PC-9 (cell line): ENCODE measurements at regions of chr3 and their contacts with region 1.

Region 1: DNA sequence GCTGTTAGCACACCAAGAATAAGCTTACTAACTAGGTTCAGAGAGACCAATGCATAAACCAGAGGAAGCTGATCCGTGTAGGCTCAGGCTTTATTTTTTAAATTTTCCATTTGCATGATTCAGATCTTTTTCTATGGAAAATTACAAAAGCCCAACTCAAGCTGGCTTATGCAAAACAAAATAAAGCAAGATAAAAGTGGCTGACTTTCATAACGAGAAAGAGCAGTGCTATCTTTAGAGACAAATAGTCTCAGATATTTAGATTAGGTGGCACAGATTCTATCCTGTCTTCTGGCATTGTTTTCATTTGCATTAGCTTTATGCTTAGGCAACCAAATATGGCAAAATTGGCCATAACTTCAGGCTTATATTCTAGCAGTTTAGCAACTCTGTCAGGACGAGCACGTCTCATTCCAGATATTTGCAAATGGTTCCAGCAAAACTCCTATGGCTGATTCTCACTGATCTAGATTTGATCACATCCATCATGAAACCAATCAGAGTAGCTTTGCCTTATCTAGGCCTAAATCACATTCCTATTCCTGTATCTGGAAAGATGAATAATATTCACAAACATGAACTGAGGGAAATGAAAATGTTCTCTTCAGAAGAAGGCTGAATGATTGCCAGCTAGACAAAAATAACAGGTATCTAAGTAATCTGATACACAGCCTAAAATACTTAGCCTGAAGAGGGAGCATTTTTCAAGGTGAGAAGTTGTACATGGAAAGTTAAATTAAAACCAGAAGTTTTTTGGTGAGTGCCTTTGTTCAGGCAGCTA is 216.4 kb upstream of the DPPA4 start:
- DNase-seq: peak; percentile 27 to 58
- H3K4me3 ChIP-seq: no peak overlapping the region
- H3K27ac ChIP-seq: no peak overlapping the region
- H3K4me1 ChIP-seq: no peaks in the 10 kb centered on the region
- H3K27me3 ChIP-seq: no peaks in the 10 kb centered on the region
- CTCF ChIP-seq: peak; percentile 57

Region 2: DNA sequence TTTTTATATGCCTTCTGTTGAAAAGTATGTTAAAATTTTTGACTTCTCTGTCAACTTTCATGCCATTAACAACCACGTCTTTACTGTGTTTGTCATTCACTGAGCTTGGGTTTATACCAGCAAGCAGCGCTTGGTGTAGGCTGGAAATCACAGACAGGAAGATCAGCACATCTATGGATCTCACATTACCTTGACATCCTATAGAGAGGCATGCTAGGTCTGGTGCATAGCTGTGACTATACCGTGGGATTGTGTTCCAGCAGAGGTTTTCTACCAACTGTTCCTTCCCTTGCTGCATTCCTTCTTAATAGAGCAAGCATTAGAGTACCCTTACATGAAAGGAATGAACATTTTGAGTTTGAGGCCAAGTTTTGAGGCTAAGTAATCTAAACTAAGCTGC is 911.3 kb before region 1 on chr3:
- CTCF ChIA-PET with region 1: no interaction called
- POLR2A ChIA-PET with region 1: no interaction called
- intact Hi-C with region 1: no loop called
- DNase-seq: no peak
- H3K4me3 ChIP-seq: no peak overlapping the region
- H3K27ac ChIP-seq: no peak overlapping the region
- H3K4me1 ChIP-seq: no peaks in the 10 kb centered on the region
- H3K27me3 ChIP-seq: no peaks in the 10 kb centered on the region
- CTCF ChIP-seq: no peak

Region 3: DNA sequence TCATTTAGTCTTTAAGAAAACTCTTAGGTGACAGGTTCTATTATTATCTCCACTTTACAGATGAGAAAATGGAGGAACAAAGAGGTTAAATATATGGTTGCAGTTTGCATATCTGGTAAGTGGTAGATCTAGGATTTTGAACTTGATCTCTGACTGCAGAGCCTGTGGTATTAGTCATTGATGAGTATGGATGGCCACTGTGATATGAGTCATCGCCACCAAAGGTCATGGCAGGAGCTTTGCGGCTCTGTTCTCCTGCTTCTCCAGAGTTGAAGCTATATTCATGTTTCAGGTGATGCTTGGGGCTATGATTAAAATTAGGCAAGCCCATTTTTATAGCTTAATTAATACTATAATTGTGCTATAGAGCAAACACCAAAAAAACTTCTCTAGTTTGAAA is 89.8 kb after region 1 on chr3:
- CTCF ChIA-PET with region 1: no interaction called
- POLR2A ChIA-PET with region 1: no interaction called
- intact Hi-C with region 1: loop called (anchors 2 kb)
- DNase-seq: peak; percentile 55 to 83
- H3K4me3 ChIP-seq: no peak overlapping the region
- H3K27ac ChIP-seq: peak overlapping the region; percentile 17
- H3K4me1 ChIP-seq: peaks cover 40% of the 10 kb centered on the region
- H3K27me3 ChIP-seq: no peaks in the 10 kb centered on the region
- CTCF ChIP-seq: no peak

Region 4: DNA sequence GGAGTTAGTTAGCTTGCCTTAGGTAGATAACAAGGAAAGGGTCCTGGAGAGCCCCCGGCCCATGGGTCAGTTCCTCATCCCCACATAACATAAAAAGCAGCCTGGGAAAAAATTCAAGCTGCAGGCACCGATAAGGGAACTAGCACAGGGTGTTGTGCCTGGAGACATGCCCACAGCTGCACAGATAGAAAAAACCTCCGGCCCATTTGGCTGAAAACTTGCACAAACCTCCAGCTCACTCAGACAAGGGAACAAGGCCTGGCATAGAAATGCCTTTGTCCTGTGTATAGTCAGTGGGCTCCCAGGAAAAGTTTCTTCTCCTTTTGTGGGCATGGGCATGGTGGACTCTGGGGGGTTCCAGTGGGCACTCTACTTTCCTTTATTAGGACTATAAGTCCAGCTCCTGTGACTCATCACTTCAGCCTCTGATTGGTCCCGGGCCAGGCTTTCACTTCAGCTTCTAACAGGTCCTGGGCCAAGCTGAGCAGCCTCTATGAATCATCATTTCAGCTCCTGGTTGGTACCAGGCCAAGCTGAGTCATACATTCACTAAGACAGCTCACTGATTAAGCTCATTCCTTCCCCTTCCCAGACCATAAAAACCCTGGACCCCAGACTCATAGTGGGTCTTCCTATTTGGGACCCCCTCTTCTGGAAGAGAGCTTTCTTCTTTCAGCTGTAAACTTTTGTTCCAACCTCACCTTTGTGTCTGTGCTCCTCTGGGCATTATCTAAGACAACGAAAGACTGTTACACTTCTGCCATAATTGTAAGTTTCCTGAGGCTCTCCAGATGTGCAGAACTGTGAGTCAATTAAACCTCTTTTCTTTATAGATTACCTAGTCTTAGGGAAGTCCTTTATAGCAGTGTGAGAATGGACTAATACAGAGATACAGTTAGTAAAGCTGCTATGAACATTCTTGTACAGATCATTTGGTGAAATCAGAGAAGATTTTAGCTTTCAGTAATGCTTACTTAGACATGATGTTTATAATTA is 131.6 kb after region 1 on chr3:
- CTCF ChIA-PET with region 1: interaction called, 3 read pairs
- POLR2A ChIA-PET with region 1: no interaction called
- intact Hi-C with region 1: loop called (anchors 5 kb)
- DNase-seq: peak; percentile 87 to 89
- H3K4me3 ChIP-seq: no peak overlapping the region
- H3K27ac ChIP-seq: peak overlapping the region; percentile 31; the same call in 1 of the 2 replicates
- H3K4me1 ChIP-seq: peaks cover 13% of the 10 kb centered on the region
- H3K27me3 ChIP-seq: no peaks in the 10 kb centered on the region
- CTCF ChIP-seq: no peak

Region 5: DNA sequence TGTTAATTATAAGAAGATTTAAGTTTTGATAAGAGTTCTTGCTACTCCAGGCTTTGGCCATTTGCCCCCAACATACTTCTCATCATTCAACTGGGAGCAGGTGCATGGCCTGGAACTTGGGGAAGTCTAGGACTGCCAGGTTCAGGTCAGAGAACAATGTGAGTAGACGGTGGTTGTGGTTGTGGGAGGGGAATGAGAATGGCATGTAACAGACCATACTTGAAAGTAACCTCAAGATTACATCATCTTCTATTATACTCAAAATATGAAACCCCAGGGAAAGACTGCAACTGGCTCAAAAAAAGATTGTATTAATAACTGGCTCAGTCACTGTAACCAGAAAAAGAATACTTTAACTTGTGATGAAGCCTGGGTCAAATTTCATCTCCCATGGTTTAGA is 148.5 kb after region 1 on chr3:
- CTCF ChIA-PET with region 1: no interaction called
- POLR2A ChIA-PET with region 1: no interaction called
- intact Hi-C with region 1: loop called (anchors 2 kb)
- DNase-seq: peak; percentile 52 to 62
- H3K4me3 ChIP-seq: no peak overlapping the region
- H3K27ac ChIP-seq: peak overlapping the region; percentile 9; the same call in 1 of the 2 replicates
- H3K4me1 ChIP-seq: peaks cover 11% of the 10 kb centered on the region
- H3K27me3 ChIP-seq: no peaks in the 10 kb centered on the region
- CTCF ChIP-seq: no peak

Region 6: GRCh38 chr3:111227216-111227615 is 1673.4 kb after region 1 on chr3:
- CTCF ChIA-PET with region 1: no interaction called
- POLR2A ChIA-PET with region 1: no interaction called
- intact Hi-C with region 1: no loop called
- DNase-seq: no peak
- H3K4me3 ChIP-seq: no peak overlapping the region
- H3K27ac ChIP-seq: no peak overlapping the region
- H3K4me1 ChIP-seq: no peaks in the 10 kb centered on the region
- H3K27me3 ChIP-seq: no peaks in the 10 kb centered on the region
- CTCF ChIP-seq: no peak